Caco-2 (cell line): ENCODE measurements at regions of chr7 and their contacts with region 1.

Region 1: GRCh38 chr7:80960244-80960795 is 41.5 kb upstream of the SEMA3C start:
- DNase-seq: no peak
- H3K4me3 ChIP-seq: no peak overlapping the region
- H3K4me3 Mint-ChIP-seq: no peak overlapping the region
- H3K27ac Mint-ChIP-seq: no peak overlapping the region
- H3K4me1 ChIP-seq: 0 out of 2 replicates have a peak, but pooled peaks cover 3% of the 10 kb centered on the region
- H3K4me1 Mint-ChIP-seq: no peaks in the 10 kb centered on the region
- H3K27me3 ChIP-seq: no peaks in the 10 kb centered on the region
- H3K27me3 Mint-ChIP-seq: no peaks in the 10 kb centered on the region
- CTCF ChIP-seq: no peak

Region 2: DNA sequence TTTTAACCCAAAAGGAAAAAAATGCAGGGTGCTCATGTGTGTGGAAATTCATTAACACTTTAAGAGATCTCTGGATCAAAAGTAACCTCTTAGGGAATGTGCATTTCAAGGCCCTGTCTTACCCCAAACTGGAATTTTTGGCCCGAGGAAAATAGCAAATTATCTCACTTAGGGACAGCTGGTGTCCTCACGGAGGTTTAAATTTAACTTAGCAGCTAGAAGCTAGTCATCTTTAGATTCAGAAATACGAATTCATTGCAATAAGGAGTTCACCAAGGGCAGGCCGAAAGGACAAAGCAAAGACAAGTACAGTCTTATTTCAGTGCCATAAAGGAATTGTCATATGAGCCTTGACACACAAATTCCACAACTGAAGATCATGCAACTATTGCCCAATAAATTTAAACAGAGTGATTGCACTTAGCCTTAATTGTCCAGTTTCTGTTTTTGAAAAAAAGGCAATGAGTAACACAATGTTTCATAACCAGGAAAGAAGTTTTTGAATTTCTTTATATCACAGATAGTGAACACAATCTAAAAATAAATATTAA is 19.0 kb before region 1 on chr7:
- CTCF ChIA-PET with region 1: no interaction called
- POLR2A ChIA-PET with region 1: no interaction called
- intact Hi-C with region 1: loop called (anchors 1 kb)
- DNase-seq: peak in 1 of 2 experiments; percentile 21
- H3K4me3 ChIP-seq: no peak overlapping the region
- H3K4me3 Mint-ChIP-seq: no peak overlapping the region
- H3K27ac Mint-ChIP-seq: peak overlapping the region; percentile 68
- H3K4me1 ChIP-seq: peaks cover 32% of the 10 kb centered on the region
- H3K4me1 Mint-ChIP-seq: peaks cover 34% of the 10 kb centered on the region
- H3K27me3 ChIP-seq: no peaks in the 10 kb centered on the region
- H3K27me3 Mint-ChIP-seq: no peaks in the 10 kb centered on the region
- CTCF ChIP-seq: no peak

Region 3: GRCh38 chr7:81111358-81111757 is 151.0 kb after region 1 on chr7:
- CTCF ChIA-PET with region 1: no interaction called
- POLR2A ChIA-PET with region 1: no interaction called
- intact Hi-C with region 1: no loop called
- DNase-seq: no peak
- H3K4me3 ChIP-seq: no peak overlapping the region
- H3K4me3 Mint-ChIP-seq: no peak overlapping the region
- H3K27ac Mint-ChIP-seq: no peak overlapping the region
- H3K4me1 ChIP-seq: no peaks in the 10 kb centered on the region
- H3K4me1 Mint-ChIP-seq: peaks cover 10% of the 10 kb centered on the region
- H3K27me3 ChIP-seq: no peaks in the 10 kb centered on the region
- H3K27me3 Mint-ChIP-seq: no peaks in the 10 kb centered on the region
- CTCF ChIP-seq: no peak